ENCODE measurements at regions of chr18 and their contacts with region 1.

Region 1: DNA sequence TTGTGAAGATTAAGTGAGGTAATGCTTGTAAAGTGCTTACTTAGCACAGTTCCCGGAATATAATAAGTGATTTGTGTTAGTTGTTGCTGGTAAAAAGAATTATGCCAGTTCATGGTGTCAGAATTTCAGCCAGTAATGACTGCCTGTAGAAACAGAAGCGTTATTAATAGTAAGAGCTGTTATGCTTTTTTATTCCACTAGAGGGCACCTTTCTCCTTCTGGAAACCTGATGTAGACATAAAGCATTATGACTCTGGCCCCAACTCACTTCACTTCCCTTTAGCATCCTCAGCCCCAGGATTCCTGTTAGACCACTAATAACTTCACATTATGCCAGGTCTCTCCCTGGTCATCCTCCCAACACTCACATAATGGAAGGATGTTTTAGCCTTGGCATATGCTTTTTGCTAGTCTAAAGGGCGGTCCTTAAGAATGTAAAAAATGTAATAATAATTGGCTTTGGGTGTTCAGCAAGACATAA is 34.9 kb downstream of the C18orf54 start:
- DNase-seq: peak; percentile 30 to 63 (median 36)
- ATAC-seq: peak; percentile 59
- H3K4me3 ChIP-seq: no peak overlapping the region
- H3K27ac ChIP-seq: no peak overlapping the region
- H3K4me1 ChIP-seq: peaks cover 6 to 23% of the 10 kb centered on the region in 2 experiments; a peak in 4 of 5 replicates
- H3K27me3 ChIP-seq: no peaks in the 10 kb centered on the region; a peak in 1 of 5 replicates
- CTCF ChIP-seq: peak; percentile 31 to 60 (median 57); a peak in 5 of 6 replicates
- EP300 ChIP-seq: no peak
- POLR2A ChIP-seq: no peak
- RAD21 ChIP-seq: peak; percentile 58 to 65

Region 2: GRCh38 chr18:54181856-54182602 is 210.6 kb before region 1 on chr18:
- CTCF ChIA-PET with region 1: no interaction called
- POLR2A ChIA-PET with region 1: no interaction called
- in situ Hi-C with region 1: no loop called
- intact Hi-C with region 1: no loop called
- DNase-seq: no peak
- ATAC-seq: no peak
- H3K4me3 ChIP-seq: no peak overlapping the region
- H3K27ac ChIP-seq: no peak overlapping the region
- H3K4me1 ChIP-seq: no peaks in the 10 kb centered on the region; a peak in 1 of 5 replicates
- H3K27me3 ChIP-seq: no peaks in the 10 kb centered on the region
- CTCF ChIP-seq: no peak
- EP300 ChIP-seq: no peak
- POLR2A ChIP-seq: no peak
- RAD21 ChIP-seq: no peak

Region 3: GRCh38 chr18:54357660-54358494 is 34.7 kb before region 1 on chr18 and contains the starts of genes C18orf54 and STARD6:
- CTCF ChIA-PET with region 1: no interaction called
- POLR2A ChIA-PET with region 1: no interaction called
- in situ Hi-C with region 1: no loop called
- intact Hi-C with region 1: loop called (anchors 5 kb)
- DNase-seq: peak; percentile 90 to 91 (median 90)
- ATAC-seq: peak; percentile 93
- H3K4me3 ChIP-seq: peak within 1 kb of the TSS; percentile 83
- H3K27ac ChIP-seq: peak within 1 kb of the TSS; percentile 84
- H3K4me1 ChIP-seq: peaks cover 2 to 7% of the 10 kb centered on the region in 2 experiments; a peak in 3 of 5 replicates
- H3K27me3 ChIP-seq: no peaks in the 10 kb centered on the region
- CTCF ChIP-seq: peak; percentile 41 to 63 (median 56)
- EP300 ChIP-seq: no peak
- POLR2A ChIP-seq: peak; percentile 85
- RAD21 ChIP-seq: peak; percentile 22 to 38; a peak in 2 of 4 replicates
- polyA plus RNA-seq, gene C18orf54: 3.2 to 3.9 TPM
- polyA plus RNA-seq, gene STARD6: 0.11 to 0.15 TPM

Region 4: DNA sequence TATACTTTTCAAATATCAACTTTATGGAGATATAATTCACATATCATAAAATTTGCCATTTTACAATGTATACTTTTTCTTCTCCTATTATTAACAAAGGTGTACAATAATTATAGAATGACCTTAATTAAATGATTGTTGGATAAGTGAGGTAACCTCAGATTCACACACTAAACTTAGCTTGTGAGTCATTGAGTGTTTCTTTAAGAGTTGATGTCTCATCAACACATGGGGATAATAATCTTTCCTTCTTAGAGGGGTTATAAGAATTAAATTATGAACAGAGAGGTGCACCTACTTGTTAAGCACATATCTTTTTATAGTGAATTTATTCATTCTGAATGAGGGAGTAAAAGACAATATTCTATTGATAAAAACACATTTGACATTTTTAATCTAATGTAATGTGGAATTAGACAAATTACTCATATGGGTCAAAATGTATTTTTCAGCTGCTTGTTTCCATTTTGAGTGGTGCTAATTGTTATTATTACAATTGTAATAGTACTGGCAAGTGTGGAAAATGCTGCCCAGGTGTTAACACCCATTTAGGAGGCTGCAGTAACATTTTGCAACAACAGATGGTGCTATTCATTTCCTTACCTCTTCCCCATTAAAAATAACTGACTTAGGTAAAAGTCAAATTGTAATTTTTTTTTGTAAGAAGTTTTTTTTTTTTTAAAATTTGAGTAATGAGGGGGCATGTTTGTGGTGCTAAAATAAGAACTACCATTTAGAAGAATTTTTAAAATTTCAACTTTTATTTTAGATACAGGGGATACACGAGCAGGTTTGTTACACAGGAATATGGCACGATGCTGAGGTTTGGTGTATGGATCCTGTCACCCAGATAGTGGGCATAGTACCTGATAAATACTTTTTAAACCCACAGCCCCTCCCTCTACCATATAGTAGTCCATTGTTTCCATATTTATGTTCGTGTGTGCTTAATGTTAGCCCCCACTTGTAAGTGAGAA is 166.3 kb after region 1 on chr18:
- CTCF ChIA-PET with region 1: no interaction called
- POLR2A ChIA-PET with region 1: no interaction called
- in situ Hi-C with region 1: no loop called
- intact Hi-C with region 1: loop called (anchors 10 kb)
- DNase-seq: peak; percentile 9 to 30 (median 22)
- ATAC-seq: no peak
- H3K4me3 ChIP-seq: no peak overlapping the region
- H3K27ac ChIP-seq: no peak overlapping the region
- H3K4me1 ChIP-seq: no peaks in the 10 kb centered on the region
- H3K27me3 ChIP-seq: no peaks in the 10 kb centered on the region
- CTCF ChIP-seq: peak; percentile 34 to 62 (median 47); a peak in 3 of 6 replicates
- EP300 ChIP-seq: no peak
- POLR2A ChIP-seq: no peak
- RAD21 ChIP-seq: peak; percentile 60 to 79

Region 5: DNA sequence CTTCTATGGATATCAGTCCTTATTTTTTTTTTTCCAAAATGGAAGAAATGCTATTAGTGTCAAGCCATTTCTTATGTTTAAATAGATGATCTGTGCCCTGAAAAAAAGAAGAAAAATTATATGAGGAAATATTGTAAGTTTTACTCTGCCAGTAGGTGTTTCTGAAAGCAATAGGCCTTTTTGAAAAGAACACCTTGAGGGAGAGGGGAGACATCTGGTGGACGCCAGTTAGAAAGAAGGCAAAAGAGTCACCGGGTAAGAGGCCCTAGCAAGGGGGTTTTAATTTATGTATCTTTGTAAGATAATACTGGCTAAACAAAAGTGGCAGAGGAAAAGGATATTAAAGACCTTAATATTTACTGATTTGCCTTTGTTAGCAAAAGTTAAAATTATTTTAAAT is 254.6 kb after region 1 on chr18:
- CTCF ChIA-PET with region 1: interaction called, 4 read pairs
- POLR2A ChIA-PET with region 1: no interaction called
- in situ Hi-C with region 1: no loop called
- intact Hi-C with region 1: loop called (anchors 10 kb)
- DNase-seq: peak in 2 of 4 experiments; percentile 7 to 30
- ATAC-seq: no peak
- H3K4me3 ChIP-seq: no peak overlapping the region
- H3K27ac ChIP-seq: no peak overlapping the region
- H3K4me1 ChIP-seq: no peaks in the 10 kb centered on the region
- H3K27me3 ChIP-seq: no peaks in the 10 kb centered on the region
- CTCF ChIP-seq: peak; percentile 16 to 67 (median 60); a peak in 3 of 6 replicates
- EP300 ChIP-seq: no peak
- POLR2A ChIP-seq: no peak
- RAD21 ChIP-seq: peak; percentile 65 to 84

Region 6: GRCh38 chr18:54671291-54671881 is 278.8 kb after region 1 on chr18:
- CTCF ChIA-PET with region 1: no interaction called
- POLR2A ChIA-PET with region 1: no interaction called
- in situ Hi-C with region 1: no loop called
- intact Hi-C with region 1: loop called (anchors 2 kb)
- DNase-seq: peak; percentile 10 to 34 (median 16)
- ATAC-seq: no peak
- H3K4me3 ChIP-seq: no peak overlapping the region
- H3K27ac ChIP-seq: no peak overlapping the region
- H3K4me1 ChIP-seq: no peaks in the 10 kb centered on the region
- H3K27me3 ChIP-seq: no peaks in the 10 kb centered on the region
- CTCF ChIP-seq: peak in 2 of 3 experiments; percentile 10 to 58; a peak in 3 of 6 replicates
- EP300 ChIP-seq: no peak
- POLR2A ChIP-seq: no peak
- RAD21 ChIP-seq: peak; percentile 66 to 76